Prostate gland (tissue), 2 donors: ENCODE measurements at regions of chr3 and their contacts with region 1.

Region 1: GRCh38 chr3:9352917-9353752 is 9.7 kb upstream of the THUMPD3 start:
- DNase-seq: peak; percentile 67
- H3K4me3 ChIP-seq: no peak overlapping the region
- H3K27ac ChIP-seq: peak overlapping the region; percentile 58 to 74
- H3K4me1 ChIP-seq: peaks cover 23% of the 10 kb centered on the region
- H3K27me3 ChIP-seq: no peaks in the 10 kb centered on the region
- CTCF ChIP-seq: peak; percentile 59 to 91 (median 85)
- POLR2A ChIP-seq: no peak

Region 2: GRCh38 chr3:9422712-9423424 is 69.7 kb after region 1 on chr3:
- intact Hi-C with region 1: loop called (anchors 5 kb)
- DNase-seq: peak; percentile 97
- H3K4me3 ChIP-seq: no peak overlapping the region
- H3K27ac ChIP-seq: peak overlapping the region; percentile 78 to 89
- H3K4me1 ChIP-seq: peaks cover 6% of the 10 kb centered on the region
- H3K27me3 ChIP-seq: no peaks in the 10 kb centered on the region
- CTCF ChIP-seq: peak in 3 of 4 experiments; percentile 19 to 66 (median 66)
- POLR2A ChIP-seq: peak; percentile 54

Region 3: DNA sequence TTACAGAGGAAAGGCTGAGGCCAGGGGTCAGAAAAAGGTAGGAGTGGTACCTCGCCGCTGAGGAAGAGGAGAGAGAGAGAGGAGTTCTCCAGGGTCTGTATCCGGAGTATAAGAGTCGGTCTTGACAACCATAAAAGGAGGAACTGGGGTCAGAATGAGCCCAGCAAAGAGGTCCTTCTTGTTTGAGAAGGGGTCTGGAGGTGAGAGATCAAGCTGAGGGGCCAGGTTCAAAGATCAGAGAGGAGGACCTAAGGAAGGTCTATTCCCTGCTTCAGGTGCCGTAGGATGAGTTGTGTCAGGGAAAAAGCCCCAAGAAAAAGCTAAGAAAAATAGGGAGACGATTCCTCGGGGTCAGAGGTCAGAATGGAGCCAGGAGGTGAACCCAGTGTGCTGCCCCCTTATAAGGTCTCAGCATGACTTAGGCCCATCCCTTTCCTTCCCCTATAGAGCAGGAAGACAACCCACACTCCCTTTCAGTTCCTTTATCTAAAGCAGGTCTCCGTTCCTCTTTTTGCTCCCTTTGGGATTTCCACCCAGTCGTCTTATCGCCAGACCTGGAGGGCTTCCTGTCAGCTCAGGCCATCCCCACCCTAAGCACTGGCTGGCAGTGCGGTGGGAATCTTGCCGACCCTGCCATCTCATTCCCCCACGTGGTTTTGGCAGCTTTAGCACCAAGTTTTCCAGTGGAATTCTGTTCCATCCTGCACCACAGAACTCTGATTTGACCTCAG is 296.8 kb after region 1 on chr3:
- intact Hi-C with region 1: loop called (anchors 10 kb)
- DNase-seq: no peak
- H3K4me3 ChIP-seq: peak overlapping the region; percentile 90 to 97
- H3K27ac ChIP-seq: peak overlapping the region; percentile 56 to 66
- H3K4me1 ChIP-seq: no peaks in the 10 kb centered on the region
- H3K27me3 ChIP-seq: no peaks in the 10 kb centered on the region
- CTCF ChIP-seq: no peak
- POLR2A ChIP-seq: no peak